ENCODE measurements at regions of chr9 and their contacts with region 1.

Region 1: DNA sequence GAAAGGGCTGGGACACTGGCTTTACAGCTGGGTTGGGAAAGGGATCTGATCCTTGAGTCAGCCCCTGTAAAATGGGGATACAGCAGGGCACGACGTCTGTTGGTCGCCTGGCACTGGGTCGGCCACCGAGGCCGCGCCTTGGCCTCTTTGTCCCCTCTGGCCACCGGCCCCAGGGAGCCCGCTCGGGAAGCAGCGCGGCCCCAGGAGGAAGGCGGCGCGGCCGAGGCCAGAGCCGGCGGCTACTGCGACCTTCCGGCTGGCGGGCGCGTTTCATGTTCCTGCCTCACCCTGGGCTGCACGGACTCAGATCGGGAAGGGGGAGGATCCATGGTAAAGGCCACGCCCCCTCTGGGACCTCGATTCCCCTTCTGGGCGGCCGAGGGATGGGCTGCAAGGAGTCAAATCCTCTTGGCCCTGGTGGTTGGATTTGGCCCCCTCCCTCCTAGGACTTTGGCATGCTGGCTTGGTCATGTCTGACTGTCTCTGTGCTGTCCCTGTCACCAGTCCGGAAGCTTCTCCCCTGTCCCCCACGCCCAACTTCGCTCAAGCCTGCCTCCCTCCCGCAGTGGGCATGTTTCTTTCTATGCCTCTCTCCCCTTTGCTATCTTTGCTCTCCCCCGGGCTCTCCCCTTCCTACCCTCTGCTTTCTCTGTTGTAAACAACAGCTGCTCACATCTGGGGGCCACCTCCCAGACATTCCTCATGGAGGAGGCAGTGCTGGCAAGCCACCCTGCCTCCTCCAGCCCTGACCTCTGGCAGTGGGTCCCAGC is 25.8 kb downstream of the FPGS start:
- DNase-seq: peak; percentile 70 to 97
- H3K4me3 ChIP-seq: peak overlapping the region; percentile 23 to 55 (median 36); a peak in 6 of 8 replicates
- H3K27ac ChIP-seq: peak overlapping the region; percentile 2; the same call in 1 of the 2 replicates
- H3K4me1 ChIP-seq: peaks cover 0 to 17% (median 12%) of the 10 kb centered on the region in 4 experiments; a peak in 6 of 7 replicates
- H3K27me3 ChIP-seq: peaks cover 0 to 12% (median 7%) of the 10 kb centered on the region in 4 experiments; a peak in 5 of 7 replicates
- CTCF ChIP-seq: 0 out of 4 replicates have a peak, but pooled peaks of 1 of the 3 experiments have one; percentile 9
- EP300 ChIP-seq: no peak
- POLR2A ChIP-seq: peak in 1 of 2 experiments; percentile 89; a peak in 2 of 3 replicates
- RAD21 ChIP-seq: no peak; a peak in 1 of 4 replicates

Region 2: DNA sequence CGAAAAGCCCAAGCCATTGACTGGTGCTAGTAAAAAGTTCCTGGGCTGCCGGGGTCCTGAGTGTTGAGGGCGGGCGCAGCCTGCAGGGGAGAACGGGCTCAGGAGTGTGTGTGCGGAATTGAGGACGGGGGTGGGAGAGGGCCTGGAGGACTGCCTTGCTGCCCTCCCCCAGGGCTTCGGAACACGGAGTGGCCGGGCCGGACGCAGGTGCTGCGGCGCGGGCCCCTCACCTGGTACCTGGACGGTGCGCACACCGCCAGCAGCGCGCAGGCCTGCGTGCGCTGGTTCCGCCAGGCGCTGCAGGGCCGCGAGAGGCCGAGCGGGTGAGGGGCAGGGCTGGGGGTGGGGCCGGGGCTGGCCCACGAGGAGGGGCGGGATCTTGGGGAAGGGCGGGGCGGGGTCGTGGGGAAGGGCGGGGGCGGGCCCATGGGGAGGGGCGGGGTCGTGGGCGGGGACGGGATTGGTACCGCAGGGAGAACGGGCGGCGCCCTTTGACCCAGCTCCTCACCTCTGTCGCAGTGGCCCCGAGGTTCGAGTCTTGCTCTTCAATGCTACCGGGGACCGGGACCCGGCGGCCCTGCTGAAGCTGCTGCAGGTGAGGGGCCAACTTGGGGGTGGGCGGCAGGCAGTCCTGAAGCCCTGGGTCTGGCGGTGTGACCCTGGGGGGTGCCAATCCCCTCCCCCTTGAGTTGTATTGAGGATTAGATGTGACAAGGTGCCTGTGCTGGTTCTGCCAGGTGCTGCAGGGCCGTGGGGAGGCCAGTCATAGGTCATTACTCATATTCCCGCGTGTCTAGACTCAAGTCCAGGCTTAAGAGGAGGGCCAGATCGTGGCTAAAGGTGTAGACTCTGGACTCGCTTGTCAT is 18.7 kb before region 1 on chr9:
- CTCF ChIA-PET with region 1: interaction called, 19 read pairs
- POLR2A ChIA-PET with region 1: interaction called, 34 read pairs
- DNase-seq: peak in 1 of 2 experiments; percentile 74
- H3K4me3 ChIP-seq: peak overlapping the region in 3 of 4 experiments; percentile 15 to 47 (median 19); a peak in 4 of 8 replicates
- H3K27ac ChIP-seq: peak overlapping the region; percentile 60; the same call in 1 of the 2 replicates
- H3K4me1 ChIP-seq: peaks cover 0 to 8% (median 6%) of the 10 kb centered on the region in 4 experiments; a peak in 5 of 7 replicates
- H3K27me3 ChIP-seq: no peaks in the 10 kb centered on the region
- CTCF ChIP-seq: 0 out of 4 replicates have a peak, but pooled peaks of 1 of the 3 experiments have one; percentile 2
- EP300 ChIP-seq: no peak
- POLR2A ChIP-seq: 0 out of 3 replicates have a peak, but pooled peaks of 1 of the 2 experiments have one; percentile 13
- RAD21 ChIP-seq: 0 out of 4 replicates have a peak, but pooled peaks of 1 of the 2 experiments have one; percentile 2

Region 3: DNA sequence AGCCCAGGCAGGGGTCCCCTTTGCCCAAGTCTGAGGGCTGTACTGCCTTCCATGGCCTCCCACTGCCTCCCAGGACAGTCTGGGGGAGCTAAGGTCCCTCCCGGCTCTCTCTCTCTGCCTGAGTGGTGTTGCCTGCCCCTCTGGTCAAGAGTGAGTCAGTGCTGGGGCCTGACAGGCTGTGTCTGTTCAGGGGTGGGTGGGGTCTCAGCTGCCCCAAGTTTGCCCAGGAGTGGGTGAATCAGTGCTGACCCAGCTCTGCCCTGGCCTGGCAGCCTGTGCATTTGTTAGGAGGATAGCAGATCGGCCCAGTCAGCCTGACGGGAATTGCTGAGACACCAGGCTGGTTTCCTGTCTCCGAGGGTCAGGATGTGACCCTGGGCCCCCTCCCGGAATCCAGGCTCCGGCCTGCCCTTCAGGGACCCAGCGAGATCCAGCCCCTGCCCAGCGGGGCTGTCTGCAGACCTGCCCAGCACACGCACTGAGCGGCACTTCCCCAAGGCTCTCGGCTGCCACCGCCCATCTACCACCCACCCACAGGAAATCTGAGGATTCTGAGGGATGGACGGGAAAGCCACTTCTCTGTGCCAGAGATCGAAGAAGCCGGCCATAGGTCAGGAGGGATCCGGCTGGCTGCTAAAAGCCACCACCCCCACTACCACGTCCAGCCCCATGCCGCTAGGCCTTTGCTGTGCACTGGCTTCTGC is 10.1 kb after region 1 on chr9:
- CTCF ChIA-PET with region 1: interaction called, 25 read pairs
- POLR2A ChIA-PET with region 1: interaction called, 4 read pairs
- DNase-seq: no peak
- H3K4me3 ChIP-seq: no peak overlapping the region
- H3K27ac ChIP-seq: no peak overlapping the region
- H3K4me1 ChIP-seq: peaks cover 0 to 4% (median 0%) of the 10 kb centered on the region in 4 experiments; a peak in 2 of 7 replicates
- H3K27me3 ChIP-seq: no peaks in the 10 kb centered on the region; a peak in 1 of 7 replicates
- CTCF ChIP-seq: no peak
- EP300 ChIP-seq: no peak
- POLR2A ChIP-seq: no peak
- RAD21 ChIP-seq: no peak

Region 4: GRCh38 chr9:127854184-127854806 is 25.8 kb after region 1 on chr9 and contains the start of gene ENG:
- CTCF ChIA-PET with region 1: interaction called, 50 read pairs
- POLR2A ChIA-PET with region 1: interaction called, 9 read pairs
- DNase-seq: no peak
- H3K4me3 ChIP-seq: no peak within 1 kb of the TSS
- H3K27ac ChIP-seq: no peak within 1 kb of the TSS
- H3K4me1 ChIP-seq: peaks cover 0 to 10% (median 6%) of the 10 kb centered on the region in 4 experiments; a peak in 5 of 7 replicates
- H3K27me3 ChIP-seq: no peaks in the 10 kb centered on the region
- CTCF ChIP-seq: no peak
- EP300 ChIP-seq: no peak
- POLR2A ChIP-seq: no peak
- RAD21 ChIP-seq: no peak
- total RNA-seq, gene ENG: 4.2 and 4.4 TPM in 2 replicates

Region 5: GRCh38 chr9:127916665-127917613 is 88.5 kb after region 1 on chr9 and contains the start of gene ST6GALNAC4:
- CTCF ChIA-PET with region 1: interaction called, 46 read pairs
- POLR2A ChIA-PET with region 1: no interaction called
- DNase-seq: peak in 1 of 2 experiments; percentile 97
- H3K4me3 ChIP-seq: peak within 1 kb of the TSS; percentile 55 to 70 (median 60)
- H3K27ac ChIP-seq: no peak within 1 kb of the TSS
- H3K4me1 ChIP-seq: peaks cover 4 to 8% (median 7%) of the 10 kb centered on the region in 4 experiments
- H3K27me3 ChIP-seq: peaks cover 0 to 12% (median 10%) of the 10 kb centered on the region in 4 experiments; a peak in 5 of 7 replicates
- CTCF ChIP-seq: no peak
- EP300 ChIP-seq: no peak
- POLR2A ChIP-seq: no peak
- RAD21 ChIP-seq: no peak
- total RNA-seq, gene ST6GALNAC4: 21.8 and 27.0 TPM in 2 replicates

Region 6: GRCh38 chr9:127954831-127955293 is 126.4 kb after region 1 on chr9:
- CTCF ChIA-PET with region 1: no interaction called
- POLR2A ChIA-PET with region 1: no interaction called
- DNase-seq: no peak
- H3K4me3 ChIP-seq: no peak overlapping the region
- H3K27ac ChIP-seq: no peak overlapping the region
- H3K4me1 ChIP-seq: peaks cover 0 to 11% (median 7%) of the 10 kb centered on the region in 4 experiments; a peak in 4 of 7 replicates
- H3K27me3 ChIP-seq: no peaks in the 10 kb centered on the region
- CTCF ChIP-seq: no peak
- EP300 ChIP-seq: no peak
- POLR2A ChIP-seq: no peak
- RAD21 ChIP-seq: no peak

Region 7: DNA sequence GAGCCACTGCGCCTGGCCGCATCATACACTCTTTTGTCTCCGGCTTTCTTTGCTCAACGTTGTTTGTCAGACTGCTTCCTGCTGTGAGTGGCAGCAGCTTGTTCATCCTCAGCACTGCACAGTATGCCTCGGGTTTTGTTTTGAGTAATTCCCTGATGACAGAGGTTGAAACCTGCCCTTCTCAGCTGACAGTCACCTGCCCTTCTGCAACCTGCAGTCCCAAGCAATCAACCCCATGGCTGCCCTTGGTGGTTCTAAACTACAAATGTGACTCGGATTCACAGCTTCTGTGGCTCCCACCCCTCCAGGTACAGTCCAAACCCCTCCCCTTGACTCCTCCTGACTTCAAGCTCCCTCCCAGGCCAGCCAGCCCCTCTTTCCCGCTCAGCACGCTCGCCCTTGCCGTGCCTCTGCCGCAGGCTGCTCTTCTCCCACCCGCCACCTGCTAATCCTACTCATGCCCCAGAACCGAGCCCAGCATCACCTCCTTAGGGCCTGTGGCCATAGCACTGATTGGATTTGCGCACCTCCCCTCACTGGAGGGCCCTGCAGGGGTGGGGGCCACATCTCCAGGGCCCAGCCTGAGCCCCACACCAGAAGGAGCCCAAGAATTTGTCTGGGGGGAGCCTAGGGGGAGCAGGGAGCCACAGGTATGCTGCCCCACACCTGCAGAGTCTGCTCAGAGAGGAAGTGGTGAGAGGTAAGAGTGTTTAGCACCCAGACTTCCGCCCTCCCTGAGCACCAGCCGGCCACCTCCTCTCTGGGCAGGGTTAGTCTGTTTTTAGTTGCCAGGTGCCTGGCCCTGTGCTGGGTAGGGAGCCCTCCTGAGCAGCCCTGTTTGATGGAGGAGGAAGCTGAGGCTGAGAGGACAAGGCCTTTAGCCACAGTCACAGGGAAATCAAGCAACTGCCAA is 142.2 kb after region 1 on chr9:
- CTCF ChIA-PET with region 1: no interaction called
- POLR2A ChIA-PET with region 1: no interaction called
- DNase-seq: no peak
- H3K4me3 ChIP-seq: no peak overlapping the region
- H3K27ac ChIP-seq: peak overlapping the region; percentile 30; the same call in 1 of the 2 replicates
- H3K4me1 ChIP-seq: peaks cover 0 to 62% (median 39%) of the 10 kb centered on the region in 4 experiments; a peak in 6 of 7 replicates
- H3K27me3 ChIP-seq: no peaks in the 10 kb centered on the region
- CTCF ChIP-seq: no peak
- EP300 ChIP-seq: no peak
- POLR2A ChIP-seq: no peak
- RAD21 ChIP-seq: no peak

Measured in H1 (cell line).